Sigmoid colon (tissue), 7 donors: ENCODE measurements at regions of chr4 and their contacts with region 1.

Region 1: GRCh38 chr4:119041951-119042560 is 93.6 kb upstream of the MYOZ2 start:
- DNase-seq: peak; percentile 79
- H3K4me3 ChIP-seq: no peak overlapping the region
- H3K27ac ChIP-seq: peak overlapping the region; percentile 18 to 98 (median 89)
- H3K4me1 ChIP-seq: peaks cover 0 to 86% (median 60%) of the 10 kb centered on the region in 4 donors
- H3K27me3 ChIP-seq: no peaks in the 10 kb centered on the region
- CTCF ChIP-seq: peak; percentile 34 to 72 (median 70)
- EP300 ChIP-seq: no peak
- POLR2A ChIP-seq: no peak

Region 2: GRCh38 chr4:118954246-118954645 is 87.8 kb before region 1 on chr4:
- intact Hi-C with region 1: no loop called
- DNase-seq: no peak
- H3K4me3 ChIP-seq: no peak overlapping the region
- H3K27ac ChIP-seq: peak overlapping the region; percentile 71 to 90 (median 85)
- H3K4me1 ChIP-seq: peaks cover 0 to 95% (median 69%) of the 10 kb centered on the region in 4 donors
- H3K27me3 ChIP-seq: no peaks in the 10 kb centered on the region
- CTCF ChIP-seq: no peak
- EP300 ChIP-seq: no peak
- POLR2A ChIP-seq: no peak

Region 3: DNA sequence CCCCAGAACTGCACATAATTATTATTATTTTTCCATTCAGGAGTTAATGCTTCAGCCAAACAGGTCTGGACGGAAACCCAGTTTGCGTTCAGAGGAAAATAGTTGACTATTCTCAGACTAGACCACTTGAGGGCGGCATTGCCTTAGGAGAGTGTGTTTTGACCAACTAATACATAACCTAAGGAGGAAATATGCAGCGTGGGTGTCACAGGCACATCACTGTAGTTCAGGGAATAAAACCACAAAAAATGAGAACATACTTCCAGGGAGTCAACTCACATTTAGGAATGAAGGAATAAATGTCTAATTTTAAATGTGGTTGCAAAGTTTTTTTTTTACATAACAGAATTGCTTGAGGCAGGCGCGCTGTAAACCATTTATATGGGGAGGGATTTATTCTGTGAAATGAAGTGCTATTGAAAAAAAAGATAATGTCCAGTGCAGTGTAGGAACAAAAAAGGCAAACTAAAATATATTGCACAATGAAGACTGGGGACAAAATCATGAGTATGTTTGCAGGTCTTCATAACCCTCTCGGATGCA is 60.1 kb before region 1 on chr4:
- intact Hi-C with region 1: loop called (anchors 2 kb)
- DNase-seq: peak; percentile 86
- H3K4me3 ChIP-seq: peak overlapping the region in 3 of 4 donors; percentile 12 to 17 (median 15)
- H3K27ac ChIP-seq: peak overlapping the region; percentile 84 to 90 (median 87)
- H3K4me1 ChIP-seq: peaks cover 0 to 91% (median 67%) of the 10 kb centered on the region in 4 donors
- H3K27me3 ChIP-seq: no peaks in the 10 kb centered on the region
- CTCF ChIP-seq: peak; percentile 63 to 90 (median 73)
- EP300 ChIP-seq: no peak
- POLR2A ChIP-seq: no peak